B cell (primary cell): ENCODE measurements at regions of chr1 and their contacts with region 1.

Region 1: DNA sequence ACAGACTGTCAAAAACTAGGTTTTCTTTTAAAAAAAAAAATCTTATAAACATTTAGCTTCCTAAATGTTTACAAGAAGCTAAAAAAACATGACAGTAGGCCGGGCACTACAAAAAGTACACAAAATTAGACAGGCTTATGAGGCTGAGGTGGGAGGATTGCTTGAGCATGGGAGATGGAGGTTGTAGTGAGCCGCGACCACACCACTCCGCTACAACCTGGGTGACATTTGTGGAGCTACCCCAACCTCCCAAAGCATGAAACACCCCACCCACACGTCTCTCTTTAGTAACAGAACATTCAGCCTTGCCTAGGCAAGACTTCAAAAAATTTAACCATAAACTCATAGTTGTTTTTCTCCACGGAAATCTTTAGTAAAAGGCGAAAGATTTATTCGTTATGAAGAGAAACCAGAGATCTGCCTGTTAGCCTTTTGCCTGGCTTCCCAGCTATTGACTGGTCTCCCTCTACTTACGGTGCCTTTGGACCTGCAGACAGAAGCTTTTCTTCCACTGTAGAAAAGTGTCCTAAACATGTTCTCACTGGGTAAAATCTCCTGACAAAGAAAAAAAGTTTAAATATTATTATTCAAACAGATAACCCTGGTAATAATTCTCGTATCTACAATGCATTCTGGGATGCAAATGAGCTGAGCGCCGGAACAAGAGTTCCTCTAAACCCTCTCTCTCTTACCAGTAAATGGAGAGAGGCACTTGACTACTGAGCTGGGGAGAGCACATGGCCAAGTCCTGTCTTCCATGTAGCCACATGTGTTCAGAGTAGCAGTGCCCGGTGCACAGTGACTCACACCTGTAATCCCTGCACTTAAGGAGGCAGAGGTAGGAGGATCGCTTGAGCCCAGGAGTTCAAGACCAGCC is 9.2 kb downstream of the RNU5D-1 start:
- DNase-seq: peak; percentile 91
- ATAC-seq: peak; percentile 80
- H3K4me3 ChIP-seq: peak overlapping the region in 3 of 5 experiments; percentile 8 to 21 (median 15)
- H3K4me3 Mint-ChIP-seq: peak overlapping the region; percentile 78
- H3K27ac ChIP-seq: peak overlapping the region; percentile 88 to 93
- H3K27ac Mint-ChIP-seq: peak overlapping the region; percentile 99
- H3K4me1 ChIP-seq: peaks cover 43 to 48% of the 10 kb centered on the region in 2 donors
- H3K4me1 Mint-ChIP-seq: peaks cover 62% of the 10 kb centered on the region
- H3K27me3 ChIP-seq: no peaks in the 10 kb centered on the region
- H3K27me3 Mint-ChIP-seq: no peaks in the 10 kb centered on the region
- CTCF ChIP-seq: no peak

Region 2: GRCh38 chr1:44609412-44609767 is 112.3 kb before region 1 on chr1:
- CTCF ChIA-PET with region 1: no interaction called
- POLR2A ChIA-PET with region 1: no interaction called
- intact Hi-C with region 1: no loop called
- DNase-seq: peak; percentile 33
- ATAC-seq: no peak
- H3K4me3 ChIP-seq: no peak overlapping the region
- H3K4me3 Mint-ChIP-seq: no peak overlapping the region
- H3K27ac ChIP-seq: no peak overlapping the region
- H3K27ac Mint-ChIP-seq: no peak overlapping the region
- H3K4me1 ChIP-seq: no peaks in the 10 kb centered on the region
- H3K4me1 Mint-ChIP-seq: no peaks in the 10 kb centered on the region
- H3K27me3 ChIP-seq: no peaks in the 10 kb centered on the region
- H3K27me3 Mint-ChIP-seq: peaks cover 11% of the 10 kb centered on the region
- CTCF ChIP-seq: peak; percentile 20

Region 3: DNA sequence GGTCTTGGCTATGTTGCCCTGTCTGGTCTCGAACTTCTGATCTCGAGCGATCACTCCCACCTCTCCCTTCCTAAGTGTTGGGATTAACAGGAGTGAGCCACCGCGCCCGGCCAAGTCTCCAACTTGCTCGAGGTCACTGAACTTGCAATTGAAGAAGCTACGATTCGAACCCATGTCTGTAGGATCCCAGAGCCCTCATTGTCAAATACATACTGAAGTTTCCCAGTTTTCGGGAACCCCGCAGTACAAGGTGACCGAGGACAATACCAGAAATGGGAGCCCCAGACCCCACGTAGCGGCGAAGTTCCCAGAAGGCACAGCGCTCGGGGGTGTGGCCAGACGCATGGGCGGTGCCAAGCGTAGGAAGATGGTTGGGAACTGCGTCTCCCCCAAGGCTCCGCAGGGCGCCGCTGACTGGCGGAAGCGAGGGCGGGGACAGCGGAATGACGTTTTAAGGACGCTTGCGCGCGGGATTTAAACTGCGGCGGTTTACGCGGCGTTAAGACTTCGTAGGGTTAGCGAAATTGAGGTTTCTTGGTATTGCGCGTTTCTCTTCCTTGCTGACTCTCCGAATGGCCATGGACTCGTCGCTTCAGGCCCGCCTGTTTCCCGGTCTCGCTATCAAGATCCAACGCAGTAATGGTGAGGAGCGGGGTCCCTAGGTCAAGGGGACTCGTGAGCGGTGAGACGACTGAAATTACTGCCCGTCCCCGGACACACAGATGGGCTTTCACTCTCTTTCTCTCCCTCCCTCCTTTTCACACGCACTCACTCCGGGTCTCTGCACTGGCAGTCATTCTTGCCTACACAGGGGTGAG is 17.8 kb after region 1 on chr1 and contains the start of gene KIF2C:
- CTCF ChIA-PET with region 1: interaction called, 196 read pairs
- POLR2A ChIA-PET with region 1: interaction called, 7 read pairs
- intact Hi-C with region 1: loop called (anchors 2 kb)
- DNase-seq: peak; percentile 97
- ATAC-seq: peak; percentile 100
- H3K4me3 ChIP-seq: peak within 1 kb of the TSS; percentile 54 to 90 (median 87)
- H3K4me3 Mint-ChIP-seq: peak within 1 kb of the TSS; percentile 95
- H3K27ac ChIP-seq: peak within 1 kb of the TSS; percentile 60 to 85
- H3K27ac Mint-ChIP-seq: peak within 1 kb of the TSS; percentile 93
- H3K4me1 ChIP-seq: peaks cover 7 to 12% of the 10 kb centered on the region in 2 donors
- H3K4me1 Mint-ChIP-seq: peaks cover 17% of the 10 kb centered on the region
- H3K27me3 ChIP-seq: no peaks in the 10 kb centered on the region
- H3K27me3 Mint-ChIP-seq: no peaks in the 10 kb centered on the region
- CTCF ChIP-seq: no peak
- total RNA-seq, gene KIF2C: 0.25 and 0.51 TPM in 2 replicates

Region 4: DNA sequence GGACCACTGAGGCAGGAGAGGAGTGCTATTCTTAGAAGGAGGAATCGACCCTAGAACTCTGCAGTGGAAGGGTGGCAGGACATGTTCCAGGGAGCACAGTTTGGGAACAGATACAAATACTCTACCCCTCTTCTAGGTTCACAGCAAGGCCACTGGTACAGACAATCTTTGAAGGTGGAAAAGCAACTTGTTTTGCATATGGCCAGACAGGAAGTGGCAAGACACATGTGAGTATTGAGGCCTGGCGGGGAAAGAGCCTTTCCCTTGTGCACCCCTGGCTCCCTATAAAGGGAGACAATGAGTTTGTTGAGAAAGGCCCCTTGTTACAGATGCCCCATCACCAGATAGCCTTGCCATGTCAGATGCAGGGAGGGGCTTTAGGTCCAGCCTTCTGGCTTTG is 35.7 kb after region 1 on chr1:
- CTCF ChIA-PET with region 1: no interaction called
- POLR2A ChIA-PET with region 1: no interaction called
- intact Hi-C with region 1: no loop called
- DNase-seq: no peak
- ATAC-seq: peak; percentile 28
- H3K4me3 ChIP-seq: no peak overlapping the region
- H3K4me3 Mint-ChIP-seq: peak overlapping the region; percentile 15
- H3K27ac ChIP-seq: no peak overlapping the region
- H3K27ac Mint-ChIP-seq: peak overlapping the region; percentile 67
- H3K4me1 ChIP-seq: peaks cover 10 to 15% of the 10 kb centered on the region in 2 donors
- H3K4me1 Mint-ChIP-seq: peaks cover 18% of the 10 kb centered on the region
- H3K27me3 ChIP-seq: no peaks in the 10 kb centered on the region
- H3K27me3 Mint-ChIP-seq: no peaks in the 10 kb centered on the region
- CTCF ChIP-seq: no peak

Region 5: GRCh38 chr1:44807262-44808062 is 85.7 kb after region 1 on chr1 and contains the start of gene DYNLT4:
- CTCF ChIA-PET with region 1: interaction called, 3 read pairs
- POLR2A ChIA-PET with region 1: interaction called, 21 read pairs
- intact Hi-C with region 1: no loop called
- DNase-seq: peak; percentile 87
- ATAC-seq: peak; percentile 58
- H3K4me3 ChIP-seq: peak within 1 kb of the TSS in 1 of 5 experiments; percentile 10
- H3K4me3 Mint-ChIP-seq: peak within 1 kb of the TSS; percentile 66
- H3K27ac ChIP-seq: peak within 1 kb of the TSS; percentile 91 to 95
- H3K27ac Mint-ChIP-seq: peak within 1 kb of the TSS; percentile 99
- H3K4me1 ChIP-seq: peaks cover 44 to 59% of the 10 kb centered on the region in 2 donors
- H3K4me1 Mint-ChIP-seq: peaks cover 66% of the 10 kb centered on the region
- H3K27me3 ChIP-seq: no peaks in the 10 kb centered on the region
- H3K27me3 Mint-ChIP-seq: no peaks in the 10 kb centered on the region
- CTCF ChIP-seq: no peak
- total RNA-seq, gene DYNLT4: 0.39 TPM in 1 of 2 replicates, not detected in the other

Region 6: DNA sequence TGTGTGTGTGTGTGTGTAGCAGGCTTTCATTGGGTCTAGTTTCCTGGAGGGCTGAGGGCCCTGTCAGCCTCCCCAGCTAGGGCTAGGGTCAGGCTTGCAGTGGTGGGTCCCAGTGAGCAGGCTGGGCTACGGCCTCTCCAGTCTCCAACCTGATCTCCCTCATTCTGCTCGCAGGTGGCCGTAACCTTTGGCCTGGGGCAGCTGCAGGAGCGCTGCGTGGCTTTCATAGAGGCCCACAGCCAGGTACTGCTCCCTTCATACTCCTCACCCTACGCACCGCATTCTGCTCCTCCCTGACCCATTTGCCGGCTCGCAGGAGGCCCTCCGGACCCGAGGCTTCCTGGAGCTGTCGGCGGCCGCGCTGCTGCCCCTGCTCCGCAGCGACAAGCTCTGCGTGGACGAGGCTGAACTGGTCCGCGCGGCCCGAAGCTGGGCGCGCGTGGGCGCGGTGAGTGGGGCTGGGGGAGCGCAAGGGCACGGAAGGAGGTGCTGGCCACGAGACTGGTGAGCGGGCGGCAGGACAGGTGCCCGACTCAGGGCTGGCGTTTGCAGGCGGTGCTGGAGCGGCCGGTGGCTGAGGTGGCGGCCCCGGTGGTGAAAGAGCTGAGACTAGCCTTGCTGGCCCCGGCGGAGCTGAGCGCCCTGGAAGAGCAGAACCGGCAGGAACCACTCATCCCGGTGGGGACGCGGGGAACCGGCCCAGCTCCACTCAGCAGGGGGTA is 91.3 kb after region 1 on chr1:
- CTCF ChIA-PET with region 1: interaction called, 7 read pairs
- POLR2A ChIA-PET with region 1: interaction called, 21 read pairs
- intact Hi-C with region 1: no loop called
- DNase-seq: no peak
- ATAC-seq: no peak
- H3K4me3 ChIP-seq: peak overlapping the region in 4 of 5 experiments; percentile 51 to 76 (median 68)
- H3K4me3 Mint-ChIP-seq: peak overlapping the region; percentile 92
- H3K27ac ChIP-seq: peak overlapping the region; percentile 70 to 86
- H3K27ac Mint-ChIP-seq: peak overlapping the region; percentile 37
- H3K4me1 ChIP-seq: peaks cover 38 to 53% of the 10 kb centered on the region in 2 donors
- H3K4me1 Mint-ChIP-seq: peaks cover 58% of the 10 kb centered on the region
- H3K27me3 ChIP-seq: no peaks in the 10 kb centered on the region
- H3K27me3 Mint-ChIP-seq: no peaks in the 10 kb centered on the region
- CTCF ChIP-seq: no peak

Region 7: GRCh38 chr1:44819608-44820327 is 98.0 kb after region 1 on chr1:
- CTCF ChIA-PET with region 1: interaction called, 7 read pairs
- POLR2A ChIA-PET with region 1: interaction called, 22 read pairs
- intact Hi-C with region 1: no loop called
- DNase-seq: peak; percentile 95
- ATAC-seq: peak; percentile 82
- H3K4me3 ChIP-seq: peak overlapping the region; percentile 56 to 80 (median 66)
- H3K4me3 Mint-ChIP-seq: peak overlapping the region; percentile 93
- H3K27ac ChIP-seq: peak overlapping the region; percentile 99 to 100
- H3K27ac Mint-ChIP-seq: peak overlapping the region; percentile 100
- H3K4me1 ChIP-seq: peaks cover 16 to 24% of the 10 kb centered on the region in 2 donors
- H3K4me1 Mint-ChIP-seq: peaks cover 35% of the 10 kb centered on the region
- H3K27me3 ChIP-seq: no peaks in the 10 kb centered on the region
- H3K27me3 Mint-ChIP-seq: no peaks in the 10 kb centered on the region
- CTCF ChIP-seq: no peak